Adrenal gland (tissue), 19 donors: ENCODE measurements at regions of chr13 and their contacts with region 1.

Region 1: DNA sequence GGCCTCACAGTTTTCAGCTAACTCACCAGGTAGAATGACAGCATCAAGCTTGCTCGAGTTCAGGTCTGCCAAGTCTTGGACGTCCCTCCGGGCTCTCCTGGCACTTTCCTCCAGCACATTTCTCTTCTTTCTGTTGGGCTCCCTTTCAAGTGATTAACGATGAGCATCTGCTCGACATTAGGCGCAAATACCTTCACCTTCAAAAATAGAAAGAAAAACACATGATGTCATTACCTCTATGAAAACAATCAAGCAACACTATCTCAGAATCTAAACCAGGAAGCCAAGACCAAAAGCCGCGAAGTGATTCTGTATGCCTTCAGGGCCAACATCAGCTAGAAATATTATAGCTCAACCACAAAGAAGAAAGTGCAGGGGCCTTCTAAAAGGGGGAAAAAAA is 15.4 kb upstream of the CLN5 start:
- DNase-seq: no peak
- H3K4me3 ChIP-seq: no peak overlapping the region
- H3K27ac ChIP-seq: no peak overlapping the region
- H3K4me1 ChIP-seq: peaks cover 0 to 8% of the 10 kb centered on the region in 2 donors
- H3K27me3 ChIP-seq: no peaks in the 10 kb centered on the region
- CTCF ChIP-seq: no peak
- POLR2A ChIP-seq: no peak

Region 2: GRCh38 chr13:75876360-75877050 is 1100.0 kb before region 1 on chr13:
- intact Hi-C with region 1: loop called in 1 of 2 experiments (anchors 10 kb)
- DNase-seq: peak; percentile 45 to 80 (median 56)
- H3K4me3 ChIP-seq: no peak overlapping the region
- H3K27ac ChIP-seq: no peak overlapping the region
- H3K4me1 ChIP-seq: peaks cover 0 to 4% of the 10 kb centered on the region in 2 donors
- H3K27me3 ChIP-seq: peaks cover 5% of the 10 kb centered on the region
- CTCF ChIP-seq: peak; percentile 72 to 93 (median 84)
- POLR2A ChIP-seq: no peak